ENCODE measurements at regions of chr1 and their contacts with region 1.

Region 1: DNA sequence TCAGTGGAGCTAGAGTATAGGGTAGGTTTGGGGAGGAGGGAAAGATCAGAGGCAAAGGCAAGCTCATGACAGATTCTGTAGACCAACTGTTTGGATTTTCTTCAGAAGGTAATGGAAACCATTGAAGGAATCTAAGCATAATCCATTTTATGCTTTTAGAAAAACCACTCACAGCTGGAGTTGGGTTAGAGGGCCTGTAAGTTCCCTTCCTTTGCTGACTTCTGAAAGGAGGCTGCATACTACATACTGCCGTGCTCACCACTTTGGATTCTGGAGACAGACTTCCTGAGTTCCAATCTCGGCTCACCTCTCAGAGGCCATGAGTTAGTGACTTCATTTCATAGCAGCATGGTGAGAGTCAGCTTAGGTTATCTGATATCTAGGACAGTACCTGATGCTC is 6.4 kb upstream of the SYT2 start:
- DNase-seq: no peak
- H3K4me3 ChIP-seq: no peak overlapping the region
- H3K27ac ChIP-seq: no peak overlapping the region
- H3K4me1 ChIP-seq: peaks cover 0 to 9% (median 0%) of the 10 kb centered on the region in 4 donors
- H3K27me3 ChIP-seq: peaks cover 5% of the 10 kb centered on the region
- CTCF ChIP-seq: no peak
- EP300 ChIP-seq: no peak
- POLR2A ChIP-seq: no peak

Region 2: DNA sequence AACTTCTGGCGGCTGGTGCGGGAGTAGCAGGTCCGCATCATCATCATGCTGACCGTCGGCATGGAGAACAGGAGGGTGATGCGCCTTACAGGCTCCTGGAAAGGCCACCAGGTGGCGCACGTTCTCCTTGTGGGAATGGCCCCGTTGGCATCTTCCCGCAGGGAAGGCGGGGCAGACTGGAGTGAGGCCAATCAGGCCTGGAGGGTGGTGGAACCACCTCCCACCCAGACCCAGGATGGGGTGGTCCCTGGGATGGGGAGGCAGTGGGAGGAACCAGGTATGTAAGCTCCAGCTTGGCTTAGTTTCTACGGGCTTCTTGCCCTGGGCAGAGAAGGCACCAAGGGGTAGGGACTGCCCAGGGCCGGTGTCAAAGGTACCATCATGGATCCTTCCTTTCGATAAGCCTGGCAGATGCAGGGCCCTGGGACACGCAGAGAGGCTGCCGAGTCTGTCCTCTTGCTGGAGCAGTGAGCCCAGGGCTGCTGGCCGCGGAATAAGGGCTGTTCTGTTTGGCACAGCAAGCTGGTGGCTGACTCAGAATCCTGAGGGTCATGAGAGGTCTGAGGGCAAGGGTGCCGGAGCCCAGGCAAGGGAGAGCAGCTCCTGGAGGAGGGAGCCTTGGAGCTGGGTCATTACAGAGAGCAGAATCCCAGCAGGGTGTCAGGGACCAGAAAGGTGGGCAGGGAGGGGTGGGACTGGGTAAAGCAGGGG is 531.7 kb before region 1 on chr1:
- in situ Hi-C with region 1: loop called (anchors 10 to 25 kb)
- intact Hi-C with region 1: loop called (anchors 5 kb)
- DNase-seq: peak; percentile 86
- H3K4me3 ChIP-seq: no peak overlapping the region
- H3K27ac ChIP-seq: no peak overlapping the region
- H3K4me1 ChIP-seq: peaks cover 0 to 3% (median 0%) of the 10 kb centered on the region in 4 donors
- H3K27me3 ChIP-seq: no peaks in the 10 kb centered on the region
- CTCF ChIP-seq: peak; percentile 63 to 88 (median 83)
- EP300 ChIP-seq: no peak
- POLR2A ChIP-seq: no peak

Region 3: GRCh38 chr1:202343652-202344349 is 372.9 kb before region 1 on chr1:
- in situ Hi-C with region 1: no loop called
- intact Hi-C with region 1: loop called (anchors 5 kb)
- DNase-seq: no peak
- H3K4me3 ChIP-seq: no peak overlapping the region
- H3K27ac ChIP-seq: no peak overlapping the region
- H3K4me1 ChIP-seq: peaks cover 0 to 25% (median 7%) of the 10 kb centered on the region in 4 donors
- H3K27me3 ChIP-seq: no peaks in the 10 kb centered on the region
- CTCF ChIP-seq: peak; percentile 80 to 85 (median 82)
- EP300 ChIP-seq: no peak
- POLR2A ChIP-seq: no peak

Region 4: DNA sequence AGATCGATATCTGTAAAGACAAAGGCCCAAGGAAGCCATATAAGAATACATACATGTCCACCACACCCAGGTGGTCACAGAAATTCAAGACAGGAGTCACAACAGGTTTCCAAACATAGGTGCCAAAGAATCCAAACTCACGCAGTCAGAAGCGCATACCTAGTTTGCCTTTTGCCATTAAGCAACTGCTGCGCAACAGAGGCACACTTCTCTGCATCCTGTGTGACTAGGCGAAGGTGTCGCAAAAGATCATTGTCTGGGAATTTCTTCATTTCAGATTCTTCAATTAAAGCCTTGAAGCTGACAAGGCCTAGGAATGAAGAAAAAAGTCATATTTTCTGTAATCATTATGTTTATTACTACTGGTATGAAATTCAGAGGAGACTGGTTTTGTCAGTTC is 25.8 kb after region 1 on chr1:
- in situ Hi-C with region 1: no loop called
- intact Hi-C with region 1: no loop called
- DNase-seq: no peak
- H3K4me3 ChIP-seq: no peak overlapping the region
- H3K27ac ChIP-seq: no peak overlapping the region
- H3K4me1 ChIP-seq: no peaks in the 10 kb centered on the region
- H3K27me3 ChIP-seq: no peaks in the 10 kb centered on the region
- CTCF ChIP-seq: no peak
- EP300 ChIP-seq: no peak
- POLR2A ChIP-seq: no peak